PC-3 (cell line): ENCODE measurements at regions of chr11 and their contacts with region 1.

Region 1: GRCh38 chr11:34351687-34352469 is 5.9 kb downstream of the ABTB2 start:
- DNase-seq: no peak
- ATAC-seq: no peak
- H3K4me3 ChIP-seq: no peak overlapping the region
- H3K27ac ChIP-seq: no peak overlapping the region
- H3K4me1 ChIP-seq: peaks cover 25% of the 10 kb centered on the region
- H3K27me3 ChIP-seq: no peaks in the 10 kb centered on the region
- CTCF ChIP-seq: no peak

Region 2: DNA sequence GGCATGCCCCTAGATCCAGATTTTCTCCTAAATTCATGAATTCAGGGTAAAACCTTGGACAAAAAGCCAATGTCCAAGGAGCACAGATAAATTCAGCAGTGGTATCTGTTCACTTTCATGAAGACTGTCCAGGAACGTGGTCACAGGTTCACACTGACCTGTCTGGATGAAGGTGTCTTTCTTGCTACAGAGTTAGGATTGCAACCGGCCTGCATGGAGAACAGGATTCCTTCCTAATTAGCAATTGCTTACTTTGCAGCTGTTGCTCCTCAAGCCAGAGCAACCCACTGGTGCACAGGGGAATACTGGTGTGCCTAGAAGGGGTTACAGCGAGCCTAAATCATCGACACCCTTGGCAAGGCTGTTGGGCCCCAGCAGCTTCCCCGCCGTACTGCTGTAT is 507.6 kb before region 1 on chr11:
- CTCF ChIA-PET with region 1: no interaction called
- POLR2A ChIA-PET with region 1: interaction called, 14 read pairs
- intact Hi-C with region 1: no loop called
- DNase-seq: no peak
- ATAC-seq: no peak
- H3K4me3 ChIP-seq: no peak overlapping the region
- H3K27ac ChIP-seq: no peak overlapping the region
- H3K4me1 ChIP-seq: no peaks in the 10 kb centered on the region
- H3K27me3 ChIP-seq: peaks cover 31% of the 10 kb centered on the region
- CTCF ChIP-seq: no peak

Region 3: GRCh38 chr11:34149786-34150185 is 202.1 kb before region 1 on chr11:
- CTCF ChIA-PET with region 1: no interaction called
- POLR2A ChIA-PET with region 1: no interaction called
- intact Hi-C with region 1: no loop called
- DNase-seq: peak; percentile 7
- ATAC-seq: peak; percentile 67
- H3K4me3 ChIP-seq: no peak overlapping the region
- H3K27ac ChIP-seq: no peak overlapping the region
- H3K4me1 ChIP-seq: no peaks in the 10 kb centered on the region
- H3K27me3 ChIP-seq: no peaks in the 10 kb centered on the region
- CTCF ChIP-seq: peak; percentile 55

Region 4: DNA sequence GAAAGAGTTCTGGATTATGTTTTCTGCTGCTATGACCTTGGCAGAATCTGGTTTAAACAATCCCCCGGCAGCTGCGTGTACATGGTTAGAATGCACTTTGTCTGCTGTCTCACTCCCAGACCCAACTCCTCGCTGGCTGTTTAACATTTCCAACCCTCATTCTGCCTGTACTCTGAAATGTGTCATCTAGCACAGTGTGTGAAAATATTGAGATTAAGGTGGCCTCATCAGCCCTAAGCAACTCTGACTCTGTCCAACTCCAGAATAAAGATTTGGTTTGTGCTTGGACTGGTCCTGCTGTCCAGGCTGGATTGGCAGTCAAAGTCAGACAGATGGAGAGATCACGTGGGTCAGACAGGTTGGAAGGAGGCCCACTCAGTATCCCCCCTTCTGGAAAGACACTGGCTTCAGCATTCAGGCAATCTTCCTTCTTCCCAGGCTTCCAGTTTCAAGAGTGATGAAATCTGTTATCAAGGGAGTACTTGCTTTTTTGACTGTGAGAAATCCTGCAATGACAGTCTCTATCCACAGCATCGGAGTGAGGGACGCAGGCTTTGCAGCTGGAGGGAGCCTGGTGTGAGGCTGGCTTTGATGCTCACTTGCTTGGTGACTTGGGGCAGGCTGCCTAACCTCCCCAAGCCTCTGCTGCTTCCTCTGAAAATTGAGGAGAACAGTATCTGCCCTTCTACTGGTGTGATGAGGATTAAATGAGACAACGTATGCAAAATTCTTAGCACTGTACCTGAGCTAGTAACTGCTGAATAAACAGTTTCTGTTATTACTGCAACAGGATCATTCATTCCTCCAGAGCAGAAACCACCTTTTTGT is 23.9 kb before region 1 on chr11:
- CTCF ChIA-PET with region 1: no interaction called
- POLR2A ChIA-PET with region 1: no interaction called
- intact Hi-C with region 1: no loop called
- DNase-seq: no peak
- ATAC-seq: no peak
- H3K4me3 ChIP-seq: no peak overlapping the region
- H3K27ac ChIP-seq: no peak overlapping the region
- H3K4me1 ChIP-seq: peaks cover 48% of the 10 kb centered on the region
- H3K27me3 ChIP-seq: no peaks in the 10 kb centered on the region
- CTCF ChIP-seq: no peak

Region 5: DNA sequence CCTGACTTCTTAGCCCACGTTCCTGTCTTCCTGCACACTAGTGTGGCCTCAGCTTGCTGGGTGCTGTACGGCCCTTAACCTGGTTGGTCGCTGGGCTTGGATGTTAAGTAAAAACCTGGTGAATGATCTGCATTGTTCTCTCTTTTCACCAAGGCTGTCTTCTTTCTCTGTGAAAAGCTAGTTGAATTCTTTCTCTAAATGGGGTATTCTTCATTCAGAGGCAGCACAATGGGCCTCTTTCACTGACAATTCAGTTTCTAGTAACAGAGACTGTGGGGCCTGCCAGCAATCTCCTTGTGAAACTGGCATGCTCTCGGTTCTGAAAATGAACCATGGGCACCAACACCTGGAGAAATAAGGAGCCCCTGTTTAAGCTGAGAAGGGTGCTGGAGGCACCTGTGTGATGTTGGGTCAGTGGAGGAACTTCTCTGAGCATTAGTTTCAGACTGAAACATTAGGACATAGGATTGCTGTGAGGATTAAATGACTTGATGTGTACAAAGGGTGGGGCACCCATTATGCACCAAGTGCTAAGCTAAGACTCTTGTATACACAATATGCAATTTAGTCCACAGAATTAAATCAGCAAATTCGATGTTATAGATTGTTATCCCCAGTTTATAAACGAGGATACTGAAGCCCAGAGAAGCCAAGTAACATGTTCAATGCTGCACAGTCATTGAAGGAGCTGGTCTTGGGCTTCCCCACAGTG is 194.8 kb after region 1 on chr11:
- CTCF ChIA-PET with region 1: no interaction called
- POLR2A ChIA-PET with region 1: no interaction called
- intact Hi-C with region 1: no loop called
- DNase-seq: peak; percentile 34
- ATAC-seq: peak; percentile 92
- H3K4me3 ChIP-seq: no peak overlapping the region
- H3K27ac ChIP-seq: no peak overlapping the region
- H3K4me1 ChIP-seq: peaks cover 7% of the 10 kb centered on the region; the same call in 1 of the 2 replicates
- H3K27me3 ChIP-seq: no peaks in the 10 kb centered on the region
- CTCF ChIP-seq: no peak